ENCODE measurements at regions of chr20 and their contacts with region 1.

Region 1: DNA sequence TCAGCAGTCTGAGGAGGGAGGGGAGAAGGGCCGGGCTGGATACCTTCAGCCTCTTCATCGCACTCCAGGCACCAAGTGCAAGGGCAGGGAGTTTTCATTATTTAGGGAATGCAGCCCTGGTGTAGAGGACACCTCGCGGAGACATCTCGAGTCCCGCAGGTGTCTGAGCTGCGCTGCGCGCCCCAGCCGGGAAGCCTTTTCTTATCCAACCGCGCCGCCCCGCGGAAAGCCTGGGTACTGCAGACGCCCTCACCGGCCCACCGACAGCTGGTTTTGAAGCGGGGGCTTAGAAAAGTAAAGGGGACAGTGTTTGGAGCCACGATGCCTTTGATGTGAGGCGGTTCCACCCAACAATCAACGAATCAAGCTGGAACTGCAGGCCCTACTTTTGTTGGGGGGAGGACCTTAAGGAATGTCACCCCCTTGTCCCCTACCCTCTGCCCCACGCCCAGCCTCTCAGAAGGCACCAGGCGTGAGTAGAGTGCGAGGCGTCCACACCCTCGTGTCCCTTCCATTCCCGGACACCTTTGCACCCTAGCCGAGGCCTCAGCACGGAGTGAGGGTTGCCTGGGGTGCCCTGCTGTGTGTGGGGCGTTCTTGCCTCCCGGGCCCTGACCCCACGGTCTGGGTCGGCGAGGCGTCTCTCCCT is 8.6 kb downstream of the NKX2-2 start:
- DNase-seq: peak; percentile 69
- H3K4me3 ChIP-seq: peak overlapping the region in 2 of 4 donors; percentile 30 to 54
- H3K27ac ChIP-seq: no peak overlapping the region
- H3K4me1 ChIP-seq: peaks cover 7 to 26% (median 20%) of the 10 kb centered on the region in 4 donors
- H3K27me3 ChIP-seq: peaks cover 87% of the 10 kb centered on the region
- CTCF ChIP-seq: peak; percentile 95 to 98 (median 97)
- EP300 ChIP-seq: no peak
- POLR2A ChIP-seq: no peak

Region 2: GRCh38 chr20:20860078-20860806 is 645.0 kb before region 1 on chr20:
- in situ Hi-C with region 1: loop called (anchors 10 to 25 kb)
- intact Hi-C with region 1: loop called (anchors 2 kb)
- DNase-seq: peak; percentile 86
- H3K4me3 ChIP-seq: no peak overlapping the region
- H3K27ac ChIP-seq: no peak overlapping the region
- H3K4me1 ChIP-seq: no peaks in the 10 kb centered on the region
- H3K27me3 ChIP-seq: peaks cover 14% of the 10 kb centered on the region
- CTCF ChIP-seq: peak; percentile 88 to 91 (median 89)
- EP300 ChIP-seq: no peak
- POLR2A ChIP-seq: no peak

Region 3: DNA sequence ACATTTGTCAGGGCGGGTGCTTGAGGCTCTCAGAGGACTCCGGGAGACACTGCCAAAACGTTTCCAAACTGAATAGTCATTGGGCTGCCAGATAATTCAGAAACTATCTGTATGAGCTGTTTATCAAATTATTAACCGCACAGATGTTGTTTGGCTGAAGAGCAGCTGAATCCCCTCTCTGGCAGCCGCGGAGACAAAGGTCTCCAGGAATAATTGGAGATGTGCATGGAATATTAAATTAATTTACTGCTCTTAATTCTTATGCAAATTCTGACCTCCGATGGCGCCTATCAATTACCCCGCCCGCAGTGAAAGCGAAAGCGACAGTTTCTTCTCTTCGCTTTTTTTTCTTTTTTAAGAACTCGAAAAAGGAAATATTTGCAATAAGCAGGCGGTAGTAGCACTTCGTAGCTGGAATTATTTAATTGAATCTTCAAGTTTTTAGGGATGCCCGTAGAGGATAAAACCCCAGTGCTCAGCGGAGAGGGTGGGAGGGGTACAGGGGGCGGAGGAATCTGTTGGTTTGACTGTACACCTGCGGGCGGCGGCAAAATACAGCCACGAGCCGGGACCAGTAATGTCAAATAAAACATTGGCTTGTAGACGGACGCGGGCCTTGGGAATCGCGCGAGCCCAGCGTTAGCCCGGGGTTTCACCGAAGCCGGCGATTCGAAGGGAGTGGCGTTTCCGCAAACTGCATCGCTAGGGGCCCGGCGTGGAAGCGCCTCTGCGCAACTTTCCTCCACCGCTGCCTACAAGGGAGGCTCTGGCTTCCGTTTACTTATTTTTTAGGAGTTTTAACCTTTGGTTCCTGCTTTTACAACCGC is 405.3 kb before region 1 on chr20:
- in situ Hi-C with region 1: loop called in 1 of 4 experiments (anchors 25 kb)
- intact Hi-C with region 1: no loop called
- DNase-seq: peak; percentile 42
- H3K4me3 ChIP-seq: peak overlapping the region; percentile 8 to 57 (median 32)
- H3K27ac ChIP-seq: no peak overlapping the region
- H3K4me1 ChIP-seq: peaks cover 6 to 38% (median 35%) of the 10 kb centered on the region in 4 donors
- H3K27me3 ChIP-seq: peaks cover 95% of the 10 kb centered on the region
- CTCF ChIP-seq: no peak
- EP300 ChIP-seq: no peak
- POLR2A ChIP-seq: no peak

Region 4: DNA sequence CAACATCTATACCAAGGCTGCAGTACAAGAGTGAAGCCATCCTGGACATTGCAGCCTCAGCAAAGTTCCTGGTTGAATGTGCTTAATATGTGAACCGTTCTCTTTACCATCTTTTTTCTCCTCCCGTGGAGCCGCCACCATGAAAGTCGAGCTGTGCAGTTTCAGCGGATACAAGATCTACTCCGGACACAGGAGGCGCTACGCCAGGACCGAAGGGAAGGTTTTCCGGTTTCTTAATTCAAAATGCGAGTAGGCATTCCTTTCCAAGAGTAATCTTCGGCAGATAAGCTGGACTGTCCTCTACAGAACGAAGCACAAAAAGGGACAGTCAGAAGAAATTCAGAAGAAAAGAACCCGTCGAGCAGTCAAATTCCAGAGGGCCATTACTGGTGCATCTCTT is 390.7 kb before region 1 on chr20:
- in situ Hi-C with region 1: no loop called
- intact Hi-C with region 1: no loop called
- DNase-seq: no peak
- H3K4me3 ChIP-seq: no peak overlapping the region
- H3K27ac ChIP-seq: no peak overlapping the region
- H3K4me1 ChIP-seq: no peaks in the 10 kb centered on the region
- H3K27me3 ChIP-seq: peaks cover 31% of the 10 kb centered on the region
- CTCF ChIP-seq: no peak
- EP300 ChIP-seq: no peak
- POLR2A ChIP-seq: no peak

Region 5: GRCh38 chr20:21235484-21236445 is 269.5 kb before region 1 on chr20:
- in situ Hi-C with region 1: loop called (anchors 5 to 25 kb)
- intact Hi-C with region 1: loop called (anchors 5 kb)
- DNase-seq: peak; percentile 69
- H3K4me3 ChIP-seq: no peak overlapping the region
- H3K27ac ChIP-seq: no peak overlapping the region
- H3K4me1 ChIP-seq: peaks cover 0 to 11% (median 4%) of the 10 kb centered on the region in 4 donors
- H3K27me3 ChIP-seq: no peaks in the 10 kb centered on the region
- CTCF ChIP-seq: peak; percentile 70 to 78 (median 73)
- EP300 ChIP-seq: no peak
- POLR2A ChIP-seq: no peak

Region 6: DNA sequence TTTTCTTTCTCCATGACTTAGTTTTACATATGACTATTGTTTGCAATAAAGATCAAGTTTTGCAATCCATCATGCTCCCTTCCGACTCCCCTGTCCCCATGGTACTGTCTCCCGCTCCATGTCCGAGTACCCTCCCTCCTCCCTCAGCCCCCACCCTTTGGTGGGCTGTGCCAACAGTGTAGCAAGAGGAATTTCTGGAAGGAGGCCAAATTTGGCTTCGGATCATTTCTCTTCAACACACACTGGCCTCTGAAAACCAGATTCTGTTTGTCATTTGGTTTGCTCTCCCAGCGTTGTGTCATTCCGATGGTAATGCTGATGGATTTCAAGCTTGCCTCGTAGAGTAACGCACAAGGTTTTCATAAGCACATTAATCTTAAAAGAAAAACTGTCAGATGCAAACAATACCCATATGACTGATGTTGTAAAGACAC is 177.3 kb after region 1 on chr20:
- in situ Hi-C with region 1: no loop called
- intact Hi-C with region 1: no loop called
- DNase-seq: no peak
- H3K4me3 ChIP-seq: no peak overlapping the region
- H3K27ac ChIP-seq: no peak overlapping the region
- H3K4me1 ChIP-seq: no peaks in the 10 kb centered on the region
- H3K27me3 ChIP-seq: no peaks in the 10 kb centered on the region
- CTCF ChIP-seq: no peak
- EP300 ChIP-seq: no peak
- POLR2A ChIP-seq: no peak